ENCODE measurements at regions of chr12 and their contacts with region 1.

Region 1: DNA sequence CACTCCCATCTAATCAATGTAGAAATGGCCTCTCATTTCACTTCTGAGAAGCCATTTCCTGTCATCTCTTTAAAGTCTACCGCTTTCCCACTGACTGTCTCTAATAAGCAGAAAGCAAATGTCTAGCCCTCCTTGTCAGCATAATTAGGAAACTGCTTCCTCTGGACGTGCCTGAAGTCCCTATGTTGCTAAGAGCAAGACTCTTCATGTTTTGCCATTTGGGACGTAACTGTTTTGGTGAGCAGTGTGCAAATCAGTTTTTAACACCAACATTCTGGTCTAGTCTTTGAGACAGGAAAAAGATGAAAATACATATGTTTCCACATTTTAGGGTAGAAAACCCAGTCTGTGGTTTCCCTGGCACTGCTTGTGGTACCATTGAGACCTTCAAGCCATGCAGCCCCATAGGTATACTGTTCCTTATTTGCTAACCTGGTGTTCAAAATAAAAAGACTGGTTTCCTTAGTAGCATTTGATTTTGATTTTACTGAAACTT is 22.2 kb downstream of the IFNG start:
- DNase-seq: no peak
- ATAC-seq: no peak
- H3K4me3 ChIP-seq: no peak overlapping the region
- H3K27ac ChIP-seq: no peak overlapping the region
- H3K4me1 ChIP-seq: no peaks in the 10 kb centered on the region
- H3K27me3 ChIP-seq: no peaks in the 10 kb centered on the region
- CTCF ChIP-seq: no peak
- POLR2A ChIP-seq: no peak
- RAD21 ChIP-seq: no peak

Region 2: DNA sequence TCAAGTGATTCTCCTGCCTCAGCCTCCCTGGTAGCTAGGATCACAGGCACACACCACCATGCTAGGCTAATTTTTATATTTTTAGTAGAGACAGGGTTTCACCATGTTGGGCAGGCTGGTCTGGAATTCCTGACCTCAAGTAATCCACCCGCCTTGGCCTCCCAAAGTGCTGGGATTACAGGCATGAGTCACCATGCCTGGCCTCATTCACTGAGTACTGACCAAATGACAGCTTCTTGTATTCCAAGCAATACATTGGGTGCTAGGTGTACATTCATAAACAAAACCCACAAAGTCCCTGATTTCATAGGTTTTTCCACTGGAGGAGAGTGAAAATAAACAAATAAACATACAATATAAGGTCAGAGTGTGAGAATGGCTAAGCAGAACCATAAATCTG is 1698.8 kb before region 1 on chr12:
- CTCF ChIA-PET with region 1: no interaction called
- POLR2A ChIA-PET with region 1: no interaction called
- dilution Hi-C with region 1: no loop called
- in situ Hi-C with region 1: no loop called
- intact Hi-C with region 1: loop called (anchors 5 kb)
- DNase-seq: peak; percentile 18
- ATAC-seq: peak; percentile 62; the same call in 1 of the 2 replicates
- H3K4me3 ChIP-seq: no peak overlapping the region
- H3K27ac ChIP-seq: no peak overlapping the region
- H3K4me1 ChIP-seq: no peaks in the 10 kb centered on the region
- H3K27me3 ChIP-seq: peaks cover 13% of the 10 kb centered on the region
- CTCF ChIP-seq: no peak
- POLR2A ChIP-seq: no peak
- RAD21 ChIP-seq: no peak

Region 3: GRCh38 chr12:68119724-68120211 is 17.6 kb before region 1 on chr12:
- CTCF ChIA-PET with region 1: no interaction called
- POLR2A ChIA-PET with region 1: no interaction called
- dilution Hi-C with region 1: no loop called
- in situ Hi-C with region 1: no loop called
- intact Hi-C with region 1: no loop called
- DNase-seq: no peak
- ATAC-seq: no peak
- H3K4me3 ChIP-seq: no peak overlapping the region
- H3K27ac ChIP-seq: no peak overlapping the region
- H3K4me1 ChIP-seq: no peaks in the 10 kb centered on the region
- H3K27me3 ChIP-seq: no peaks in the 10 kb centered on the region; the same call in 1 of the 2 replicates
- CTCF ChIP-seq: no peak
- POLR2A ChIP-seq: no peak
- RAD21 ChIP-seq: no peak

Measured in IMR-90 (cell line).